ENCODE measurements at regions of chr17 and their contacts with region 1.

Region 1: GRCh38 chr17:79393358-79394202 is 217.3 kb downstream of the RBFOX3 start:
- DNase-seq: peak; percentile 65 to 96
- H3K4me3 ChIP-seq: no peak overlapping the region
- CTCF ChIP-seq: peak in 1 of 3 donors; percentile 78
- POLR2A ChIP-seq: no peak

Region 2: GRCh38 chr17:79082311-79083190 is 311.0 kb before region 1 on chr17:
- intact Hi-C with region 1: loop called (anchors 5 kb)
- DNase-seq: no peak
- H3K4me3 ChIP-seq: no peak overlapping the region
- CTCF ChIP-seq: peak in 1 of 3 donors; percentile 47
- POLR2A ChIP-seq: no peak

Region 3: GRCh38 chr17:79188048-79188447 is 205.5 kb before region 1 on chr17:
- intact Hi-C with region 1: loop called (anchors 10 kb)
- DNase-seq: no peak
- H3K4me3 ChIP-seq: no peak overlapping the region
- CTCF ChIP-seq: no peak
- POLR2A ChIP-seq: no peak

Measured in lower leg skin (tissue), 4 donors.